Right cardiac atrium (tissue), 5 donors: ENCODE measurements at regions of chr4 and their contacts with region 1.

Region 1: GRCh38 chr4:185591679-185592141 is 56.4 kb upstream of the PDLIM3 start:
- DNase-seq: no peak
- ATAC-seq: peak; percentile 31 to 36
- H3K4me3 ChIP-seq: peak overlapping the region; percentile 1
- H3K27ac ChIP-seq: no peak overlapping the region
- H3K4me1 ChIP-seq: no peaks in the 10 kb centered on the region
- H3K27me3 ChIP-seq: no peaks in the 10 kb centered on the region

Region 2: DNA sequence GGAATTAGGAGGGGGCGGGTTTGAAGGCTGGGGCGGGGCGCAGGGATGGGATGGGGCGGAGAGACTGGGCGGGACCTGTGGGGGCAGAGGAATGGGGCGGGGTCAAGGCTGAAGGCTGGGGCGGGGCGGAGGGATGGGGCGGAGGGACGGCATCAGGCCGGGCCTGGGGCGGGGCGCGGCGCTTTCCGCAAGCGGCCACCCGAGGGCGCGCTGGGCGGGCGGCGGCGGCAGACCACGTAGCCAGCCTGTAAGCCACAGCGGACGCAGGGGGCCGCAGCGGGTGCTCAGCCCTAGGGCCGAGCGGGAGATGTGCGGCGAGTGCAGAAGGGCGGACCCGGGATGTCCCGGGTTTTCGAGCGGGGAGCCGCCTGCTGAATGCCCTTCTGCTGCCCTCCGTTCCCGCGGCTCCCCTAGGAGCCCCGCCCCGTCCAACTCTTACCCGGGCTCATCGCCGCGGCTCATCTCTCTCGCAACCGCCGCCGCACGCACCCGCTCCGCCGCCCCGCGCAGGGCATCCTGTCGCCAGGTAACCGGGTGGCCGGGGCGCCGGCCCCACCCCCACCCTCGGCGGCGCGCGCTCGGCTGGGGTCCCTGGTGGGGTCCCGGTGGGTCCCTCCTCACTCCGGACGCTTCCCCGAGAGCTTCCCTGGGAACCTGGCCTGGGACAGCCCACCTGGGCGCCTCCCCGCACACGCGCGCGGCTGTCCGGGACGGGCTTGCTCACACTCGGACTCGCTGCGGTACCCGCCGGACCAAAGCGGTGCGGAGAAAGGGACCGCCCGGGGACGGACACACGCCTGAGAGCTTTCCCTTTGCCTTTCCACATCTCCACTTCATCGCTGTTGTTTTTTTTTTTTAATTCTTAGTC is 120.2 kb before region 1 on chr4 and contains the start of gene CCDC110:
- intact Hi-C with region 1: loop called in 3 of 4 experiments (anchors 5 kb)
- DNase-seq: peak; percentile 94 to 98 (median 97)
- ATAC-seq: peak; percentile 98 to 99
- H3K4me3 ChIP-seq: peak within 1 kb of the TSS; percentile 98
- H3K27ac ChIP-seq: no peak within 1 kb of the TSS
- H3K4me1 ChIP-seq: no peaks in the 10 kb centered on the region
- H3K27me3 ChIP-seq: no peaks in the 10 kb centered on the region
- total RNA-seq, gene CCDC110: 1.4 to 3.7 (median 2.8) TPM

Region 3: GRCh38 chr4:185921583-185922555 is 330.2 kb after region 1 on chr4:
- intact Hi-C with region 1: no loop called
- DNase-seq: no peak
- ATAC-seq: peak in 1 of 2 donors; percentile 13
- H3K4me3 ChIP-seq: peak overlapping the region; percentile 58
- H3K27ac ChIP-seq: no peak overlapping the region
- H3K4me1 ChIP-seq: peaks cover 5% of the 10 kb centered on the region
- H3K27me3 ChIP-seq: no peaks in the 10 kb centered on the region